Motor neuron (in vitro differentiated cells): ENCODE measurements at regions of chr3 and their contacts with region 1.

Region 1: GRCh38 chr3:37028329-37028728 is 35.0 kb downstream of the MLH1 start:
- ATAC-seq: no peak
- H3K4me3 ChIP-seq: no peak overlapping the region
- H3K27ac ChIP-seq: no peak overlapping the region
- H3K4me1 ChIP-seq: no peaks in the 10 kb centered on the region

Region 2: DNA sequence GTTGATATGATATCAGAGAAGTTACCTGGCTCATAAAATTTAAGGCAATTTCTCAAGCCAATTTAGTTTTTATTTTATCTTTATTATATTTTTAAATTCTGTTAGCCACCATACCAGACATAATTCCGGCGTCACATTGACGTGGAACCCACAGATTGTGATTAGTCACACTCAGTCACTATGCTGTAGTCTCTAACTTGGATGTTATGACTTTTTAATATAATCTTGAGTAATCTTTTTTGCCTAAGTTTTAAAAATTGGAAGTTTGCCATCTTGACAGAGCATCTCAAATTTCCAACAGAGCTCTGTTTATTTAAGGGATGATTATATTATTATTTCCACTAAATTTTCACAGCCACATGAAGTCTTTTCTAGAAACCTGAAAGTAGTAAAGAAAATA is 254.3 kb before region 1 on chr3:
- in situ Hi-C with region 1: no loop called
- ATAC-seq: no peak
- H3K4me3 ChIP-seq: no peak overlapping the region
- H3K27ac ChIP-seq: no peak overlapping the region
- H3K4me1 ChIP-seq: no peaks in the 10 kb centered on the region

Region 3: DNA sequence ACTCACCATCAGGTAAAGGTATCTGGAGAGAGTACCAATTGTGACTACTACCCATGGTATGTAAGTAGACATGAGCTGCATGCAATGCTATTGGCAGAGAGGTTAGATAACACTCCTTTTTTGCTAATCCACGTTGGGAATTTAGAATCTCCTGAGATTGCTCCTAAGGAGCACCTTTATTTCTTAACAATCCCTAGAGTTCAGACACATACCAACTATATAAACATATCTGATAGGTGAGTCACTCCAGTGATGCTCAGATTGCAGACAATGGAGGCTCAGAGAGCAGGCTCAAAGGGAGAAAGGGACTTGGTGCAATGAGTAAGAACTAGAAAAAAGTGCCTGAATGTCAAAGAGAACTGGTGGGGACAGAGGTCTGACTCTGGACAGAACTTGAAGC is 193.1 kb after region 1 on chr3:
- in situ Hi-C with region 1: loop called in 1 of 9 experiments (anchors 25 kb)
- ATAC-seq: peak in 7 of 8 experiments; percentile 41 to 85 (median 55)
- H3K4me3 ChIP-seq: no peak overlapping the region
- H3K27ac ChIP-seq: no peak overlapping the region
- H3K4me1 ChIP-seq: peaks cover 0 to 7% of the 10 kb centered on the region in 2 donors